ENCODE measurements at regions of chr2 and their contacts with region 1.

Region 1: GRCh38 chr2:127526149-127527000 is at the start of gene IWS1:
- DNase-seq: peak; percentile 82 to 98 (median 90)
- ATAC-seq: peak; percentile 87
- H3K4me3 ChIP-seq: peak within 1 kb of the TSS; percentile 69 to 75
- H3K4me3 Mint-ChIP-seq: peak within 1 kb of the TSS; percentile 98
- H3K27ac ChIP-seq: peak within 1 kb of the TSS; percentile 91 to 97
- H3K27ac Mint-ChIP-seq: peak within 1 kb of the TSS; percentile 99
- H3K4me1 ChIP-seq: peaks cover 31% of the 10 kb centered on the region
- H3K4me1 Mint-ChIP-seq: peaks cover 37% of the 10 kb centered on the region
- H3K27me3 ChIP-seq: no peaks in the 10 kb centered on the region
- H3K27me3 Mint-ChIP-seq: no peaks in the 10 kb centered on the region
- CTCF ChIP-seq: no peak
- total RNA-seq, gene IWS1: 30.4 to 33.4 TPM

Region 2: GRCh38 chr2:127293748-127294562 is 232.4 kb before region 1 on chr2 and contains the start of gene ERCC3:
- CTCF ChIA-PET with region 1: no interaction called
- POLR2A ChIA-PET with region 1: no interaction called
- intact Hi-C with region 1: loop called (anchors 1 kb)
- DNase-seq: peak; percentile 56 to 90 (median 83)
- ATAC-seq: peak; percentile 91
- H3K4me3 ChIP-seq: peak within 1 kb of the TSS; percentile 75 to 91
- H3K4me3 Mint-ChIP-seq: peak within 1 kb of the TSS; percentile 94
- H3K27ac ChIP-seq: peak within 1 kb of the TSS; percentile 74 to 76
- H3K27ac Mint-ChIP-seq: peak within 1 kb of the TSS; percentile 91
- H3K4me1 ChIP-seq: peaks cover 13% of the 10 kb centered on the region
- H3K4me1 Mint-ChIP-seq: peaks cover 45% of the 10 kb centered on the region
- H3K27me3 ChIP-seq: no peaks in the 10 kb centered on the region
- H3K27me3 Mint-ChIP-seq: no peaks in the 10 kb centered on the region
- CTCF ChIP-seq: no peak
- total RNA-seq, gene ERCC3: 43.2 to 46.4 TPM

Region 3: DNA sequence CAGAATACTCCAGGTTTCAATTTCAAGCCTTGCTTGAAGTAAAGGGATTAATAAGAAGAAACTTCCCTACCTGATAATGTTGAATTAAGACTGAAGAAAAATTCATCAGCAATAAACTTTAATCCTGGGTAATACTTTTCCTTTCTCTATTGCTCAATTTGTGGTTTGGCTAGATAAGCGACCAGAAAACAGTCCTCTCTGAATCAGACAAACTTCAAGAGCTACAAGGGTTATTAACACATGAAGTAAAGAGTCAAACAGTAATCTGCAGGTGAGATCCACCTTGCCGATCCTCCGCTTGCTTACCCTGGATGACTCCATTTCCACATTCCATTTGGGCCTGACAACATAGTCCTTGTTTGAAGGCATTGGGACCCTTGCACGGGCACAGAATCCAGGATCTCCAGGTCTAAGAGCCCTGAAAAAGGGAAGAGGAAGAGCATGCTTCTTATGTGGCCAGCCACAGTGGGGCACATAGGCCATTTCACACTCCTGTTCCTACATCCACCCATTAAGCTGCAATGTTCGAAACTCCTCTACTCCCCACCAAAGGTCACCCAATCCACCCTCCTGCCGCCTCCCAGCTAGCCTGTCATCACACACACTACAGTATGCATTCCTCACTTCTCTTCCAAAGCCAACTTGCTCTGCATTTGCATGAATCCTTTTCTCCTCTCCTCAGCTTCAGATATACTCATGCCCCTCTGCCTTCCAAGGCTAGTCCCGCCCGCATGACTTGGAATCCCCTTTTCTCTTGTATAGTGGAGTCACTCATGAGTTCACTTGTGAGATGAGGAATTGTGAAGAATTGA is 39.9 kb before region 1 on chr2:
- CTCF ChIA-PET with region 1: no interaction called
- POLR2A ChIA-PET with region 1: no interaction called
- intact Hi-C with region 1: loop called in 1 of 2 experiments (anchors 2 kb)
- DNase-seq: no peak
- ATAC-seq: no peak
- H3K4me3 ChIP-seq: no peak overlapping the region
- H3K4me3 Mint-ChIP-seq: peak overlapping the region; percentile 55
- H3K27ac ChIP-seq: peak overlapping the region in 1 of 2 experiments; percentile 59
- H3K27ac Mint-ChIP-seq: peak overlapping the region; percentile 85
- H3K4me1 ChIP-seq: peaks cover 18% of the 10 kb centered on the region
- H3K4me1 Mint-ChIP-seq: peaks cover 35% of the 10 kb centered on the region
- H3K27me3 ChIP-seq: no peaks in the 10 kb centered on the region
- H3K27me3 Mint-ChIP-seq: no peaks in the 10 kb centered on the region
- CTCF ChIP-seq: no peak

Region 4: GRCh38 chr2:127545796-127546195 is 19.4 kb after region 1 on chr2:
- CTCF ChIA-PET with region 1: no interaction called
- POLR2A ChIA-PET with region 1: no interaction called
- intact Hi-C with region 1: no loop called
- DNase-seq: no peak
- ATAC-seq: no peak
- H3K4me3 ChIP-seq: no peak overlapping the region
- H3K4me3 Mint-ChIP-seq: no peak overlapping the region
- H3K27ac ChIP-seq: no peak overlapping the region
- H3K27ac Mint-ChIP-seq: no peak overlapping the region
- H3K4me1 ChIP-seq: no peaks in the 10 kb centered on the region
- H3K4me1 Mint-ChIP-seq: no peaks in the 10 kb centered on the region
- H3K27me3 ChIP-seq: peaks cover 0 to 6% of the 10 kb centered on the region in 2 experiments
- H3K27me3 Mint-ChIP-seq: peaks cover 23% of the 10 kb centered on the region
- CTCF ChIP-seq: no peak

Region 5: GRCh38 chr2:127649684-127650040 is 123.3 kb after region 1 on chr2:
- CTCF ChIA-PET with region 1: interaction called, 3 read pairs
- POLR2A ChIA-PET with region 1: no interaction called
- intact Hi-C with region 1: loop called (anchors 2 to 5 kb)
- DNase-seq: peak; percentile 74 to 94 (median 83)
- ATAC-seq: peak; percentile 81
- H3K4me3 ChIP-seq: no peak overlapping the region
- H3K4me3 Mint-ChIP-seq: peak overlapping the region; percentile 51
- H3K27ac ChIP-seq: no peak overlapping the region
- H3K27ac Mint-ChIP-seq: peak overlapping the region; percentile 71
- H3K4me1 ChIP-seq: peaks cover 8% of the 10 kb centered on the region
- H3K4me1 Mint-ChIP-seq: peaks cover 21% of the 10 kb centered on the region
- H3K27me3 ChIP-seq: no peaks in the 10 kb centered on the region
- H3K27me3 Mint-ChIP-seq: peaks cover 1% of the 10 kb centered on the region
- CTCF ChIP-seq: peak; percentile 89

Region 6: DNA sequence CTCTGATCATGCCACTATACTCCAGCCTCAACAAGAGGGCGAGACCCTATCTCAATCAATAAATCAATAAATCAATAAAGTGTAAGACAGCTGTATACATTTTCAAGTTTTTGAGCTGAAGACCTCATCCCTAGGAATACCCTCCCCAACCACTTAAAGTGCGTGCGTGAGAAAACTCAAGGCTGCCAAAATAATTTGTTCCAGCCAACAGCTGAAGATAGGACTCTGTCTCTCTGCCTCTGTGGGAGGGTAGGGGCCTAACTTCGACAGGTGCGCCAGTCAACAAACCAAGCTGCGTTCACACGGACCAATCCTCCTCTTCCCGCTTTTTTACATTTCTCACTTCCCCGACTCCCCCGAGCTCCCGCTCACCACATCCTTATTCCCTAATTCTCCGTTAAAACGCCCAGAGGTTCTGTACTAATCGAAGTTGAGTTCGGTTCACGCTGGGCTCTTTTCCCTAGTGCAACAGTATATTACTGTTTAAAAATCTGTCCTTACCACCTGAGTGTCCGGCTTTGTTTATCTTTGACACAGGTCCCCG is 331.0 kb after region 1 on chr2:
- CTCF ChIA-PET with region 1: no interaction called
- POLR2A ChIA-PET with region 1: no interaction called
- intact Hi-C with region 1: loop called in 1 of 2 experiments (anchors 10 kb)
- DNase-seq: peak in 3 of 9 experiments; percentile 11 to 44 (median 22)
- ATAC-seq: no peak
- H3K4me3 ChIP-seq: peak overlapping the region; percentile 83 to 94
- H3K4me3 Mint-ChIP-seq: peak overlapping the region; percentile 90
- H3K27ac ChIP-seq: peak overlapping the region; percentile 76 to 82
- H3K27ac Mint-ChIP-seq: peak overlapping the region; percentile 85
- H3K4me1 ChIP-seq: peaks cover 28% of the 10 kb centered on the region
- H3K4me1 Mint-ChIP-seq: peaks cover 51% of the 10 kb centered on the region
- H3K27me3 ChIP-seq: no peaks in the 10 kb centered on the region
- H3K27me3 Mint-ChIP-seq: no peaks in the 10 kb centered on the region
- CTCF ChIP-seq: no peak

Region 7: DNA sequence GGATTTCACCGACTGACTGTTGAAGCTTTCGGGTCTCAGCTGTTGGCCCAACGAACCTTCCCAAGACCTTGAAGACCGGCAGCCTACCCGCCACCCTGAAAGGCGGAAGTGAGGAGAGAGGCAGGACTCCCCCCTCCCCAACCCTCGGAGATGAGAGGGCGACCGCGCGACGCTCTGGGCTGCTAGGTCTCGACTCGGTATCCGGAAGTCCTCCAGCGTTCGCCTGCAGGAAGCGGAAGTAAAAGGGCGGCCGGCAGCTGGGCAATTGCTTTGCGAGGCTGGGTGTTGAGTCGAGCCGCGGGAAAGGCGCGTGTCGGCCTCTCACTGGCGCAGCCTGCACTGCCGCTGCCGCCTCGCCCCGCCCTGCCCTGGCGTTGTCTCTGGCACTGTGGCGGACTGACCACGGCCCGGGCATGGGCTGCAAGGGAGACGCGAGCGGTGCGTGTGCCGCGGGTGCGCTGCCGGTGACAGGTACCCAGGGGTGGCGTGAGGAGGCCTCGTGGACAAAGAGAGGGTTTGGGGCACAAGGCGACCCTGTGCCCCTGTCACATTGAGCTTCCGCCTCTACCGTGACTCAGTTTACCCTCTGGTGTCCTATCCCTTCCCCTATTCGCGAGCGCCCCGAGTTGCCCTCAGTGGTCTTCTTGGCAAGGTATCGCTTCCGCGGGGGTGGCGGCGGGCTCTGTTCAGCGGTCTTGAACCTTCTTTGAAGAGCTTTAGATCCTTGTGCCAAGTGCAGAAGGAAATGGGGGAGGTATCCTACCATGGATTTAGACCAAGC is 564.8 kb after region 1 on chr2 and contains the start of gene UGGT1:
- CTCF ChIA-PET with region 1: no interaction called
- POLR2A ChIA-PET with region 1: no interaction called
- intact Hi-C with region 1: loop called in 1 of 2 experiments (anchors 5 kb)
- DNase-seq: peak; percentile 87 to 98 (median 94)
- ATAC-seq: peak; percentile 97
- H3K4me3 ChIP-seq: peak within 1 kb of the TSS; percentile 86 to 94
- H3K4me3 Mint-ChIP-seq: peak within 1 kb of the TSS; percentile 90
- H3K27ac ChIP-seq: peak within 1 kb of the TSS; percentile 60 to 89
- H3K27ac Mint-ChIP-seq: peak within 1 kb of the TSS; percentile 95
- H3K4me1 ChIP-seq: peaks cover 5% of the 10 kb centered on the region
- H3K4me1 Mint-ChIP-seq: peaks cover 49% of the 10 kb centered on the region
- H3K27me3 ChIP-seq: no peaks in the 10 kb centered on the region
- H3K27me3 Mint-ChIP-seq: no peaks in the 10 kb centered on the region
- CTCF ChIP-seq: no peak
- total RNA-seq, gene UGGT1: 25.6 to 25.9 TPM